Activated CD4-positive, alpha-beta T cell treated with anti-CD3 and anti-CD28 coated beads for 36 hours (primary cell): ENCODE measurements at regions of chr13 and their contacts with region 1.

Region 1: GRCh38 chr13:102460801-102461200 is 59.0 kb upstream of the FGF14 start:
- DNase-seq: no peak
- ATAC-seq: no peak
- H3K4me3 Mint-ChIP-seq: no peak overlapping the region
- H3K27ac Mint-ChIP-seq: no peak overlapping the region
- H3K4me1 Mint-ChIP-seq: peaks cover 6% of the 10 kb centered on the region
- H3K27me3 Mint-ChIP-seq: peaks cover 15% of the 10 kb centered on the region

Region 2: GRCh38 chr13:101514788-101515187 is 946.0 kb before region 1 on chr13:
- CTCF ChIA-PET with region 1: no interaction called
- POLR2A ChIA-PET with region 1: no interaction called
- intact Hi-C with region 1: loop called in 1 of 2 experiments (anchors 2 kb)
- DNase-seq: peak; percentile 19
- ATAC-seq: no peak
- H3K4me3 Mint-ChIP-seq: no peak overlapping the region
- H3K27ac Mint-ChIP-seq: no peak overlapping the region
- H3K4me1 Mint-ChIP-seq: no peaks in the 10 kb centered on the region
- H3K27me3 Mint-ChIP-seq: peaks cover 3% of the 10 kb centered on the region

Region 3: GRCh38 chr13:101942038-101942437 is 518.8 kb before region 1 on chr13:
- CTCF ChIA-PET with region 1: interaction called, 3 read pairs
- POLR2A ChIA-PET with region 1: no interaction called
- intact Hi-C with region 1: loop called (anchors 2 to 5 kb)
- DNase-seq: no peak
- ATAC-seq: no peak
- H3K4me3 Mint-ChIP-seq: no peak overlapping the region
- H3K27ac Mint-ChIP-seq: no peak overlapping the region
- H3K4me1 Mint-ChIP-seq: no peaks in the 10 kb centered on the region
- H3K27me3 Mint-ChIP-seq: peaks cover 9% of the 10 kb centered on the region

Region 4: DNA sequence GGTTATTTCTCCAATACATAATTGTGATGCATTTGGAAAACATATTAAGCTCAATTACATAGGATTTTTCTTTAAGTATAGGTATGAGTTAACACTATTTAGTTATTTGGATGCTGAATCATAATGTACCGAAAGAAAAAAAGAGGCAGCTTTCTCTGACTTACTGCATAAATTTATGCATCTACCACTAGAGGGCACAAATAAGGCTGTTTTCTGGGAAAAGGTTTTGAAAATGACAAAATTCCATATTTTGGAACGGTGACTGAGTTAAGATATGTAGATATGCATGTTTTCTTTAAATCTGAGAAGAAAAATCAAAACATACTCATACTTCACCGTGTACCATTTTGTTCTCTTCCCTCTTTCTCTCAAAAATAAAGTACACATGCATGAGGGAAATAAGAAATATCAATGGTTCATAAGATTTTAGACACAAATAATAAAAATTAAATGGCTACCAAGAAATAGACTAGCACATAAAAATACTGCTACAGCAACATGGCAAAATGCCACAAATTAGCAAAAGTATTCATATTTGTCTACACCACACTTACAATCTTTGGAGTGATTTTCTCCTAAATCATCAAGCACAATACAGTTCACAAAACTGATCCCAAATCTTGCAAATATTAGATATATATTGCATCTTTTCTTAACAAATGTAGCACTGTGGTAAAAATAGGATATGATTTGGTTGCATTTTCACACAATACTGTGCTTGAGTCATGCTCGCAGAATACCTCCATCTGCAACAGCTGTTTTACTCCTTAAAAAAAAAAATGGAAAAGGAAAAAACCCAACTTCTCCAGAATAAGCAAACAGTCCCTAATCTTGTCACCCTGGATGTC is 319.0 kb before region 1 on chr13:
- CTCF ChIA-PET with region 1: interaction called, 3 read pairs
- POLR2A ChIA-PET with region 1: no interaction called
- intact Hi-C with region 1: loop called (anchors 1 kb)
- DNase-seq: no peak
- ATAC-seq: no peak
- H3K4me3 Mint-ChIP-seq: no peak overlapping the region
- H3K27ac Mint-ChIP-seq: no peak overlapping the region
- H3K4me1 Mint-ChIP-seq: no peaks in the 10 kb centered on the region
- H3K27me3 Mint-ChIP-seq: no peaks in the 10 kb centered on the region

Region 5: DNA sequence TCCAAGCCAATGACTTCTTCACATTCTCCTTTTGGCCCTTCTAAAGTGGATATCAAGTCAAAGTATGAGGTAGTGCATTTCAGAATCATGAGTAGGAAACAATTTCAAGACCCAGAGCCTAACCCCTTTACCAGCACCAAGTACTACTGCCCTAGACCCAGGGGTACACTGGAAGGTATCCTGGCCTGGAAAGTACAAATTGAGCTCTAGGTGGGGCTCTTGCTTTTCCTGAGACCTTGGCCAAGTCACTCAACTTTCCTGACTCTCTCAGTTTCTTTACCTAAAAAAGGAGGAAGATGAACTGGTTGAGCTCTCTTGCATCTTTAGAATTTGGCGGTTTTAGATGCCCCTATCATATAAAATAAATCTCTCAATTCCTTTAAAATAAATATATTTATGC is 263.6 kb before region 1 on chr13:
- CTCF ChIA-PET with region 1: no interaction called
- POLR2A ChIA-PET with region 1: no interaction called
- intact Hi-C with region 1: loop called in 1 of 2 experiments (anchors 1 kb)
- DNase-seq: no peak
- ATAC-seq: no peak
- H3K4me3 Mint-ChIP-seq: no peak overlapping the region
- H3K27ac Mint-ChIP-seq: no peak overlapping the region
- H3K4me1 Mint-ChIP-seq: peaks cover 2% of the 10 kb centered on the region
- H3K27me3 Mint-ChIP-seq: peaks cover 13% of the 10 kb centered on the region